Astrocyte of the cerebellum (primary cell): ENCODE measurements at regions of chr7 and their contacts with region 1.

Region 1: DNA sequence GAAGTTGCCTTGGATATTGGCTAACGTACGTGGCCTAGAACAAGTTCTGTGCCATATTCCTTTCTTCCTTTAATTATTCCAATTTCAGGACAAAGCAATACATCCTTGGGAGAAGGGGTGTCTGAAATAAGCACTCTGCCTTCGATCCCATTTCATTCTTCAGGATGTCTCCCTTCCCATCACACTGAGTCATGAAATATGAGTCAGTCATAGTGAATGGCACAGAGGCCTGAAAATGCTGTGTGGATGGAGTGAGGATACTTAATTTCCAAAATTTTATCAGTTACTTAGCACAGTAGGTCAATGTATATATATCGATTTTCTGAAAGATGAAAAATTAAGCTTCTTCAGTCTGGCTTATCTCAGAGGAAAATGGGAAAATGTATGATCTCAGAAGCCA is 19.5 kb downstream of the EVX1 start:
- DNase-seq: no peak
- H3K4me3 ChIP-seq: no peak overlapping the region
- CTCF ChIP-seq: no peak

Region 2: GRCh38 chr7:27179503-27180430 is 82.4 kb before region 1 on chr7:
- in situ Hi-C with region 1: no loop called
- DNase-seq: no peak
- H3K4me3 ChIP-seq: no peak overlapping the region
- CTCF ChIP-seq: peak; percentile 69

Region 3: GRCh38 chr7:27224983-27225934 is 36.9 kb before region 1 on chr7:
- in situ Hi-C with region 1: no loop called
- DNase-seq: no peak
- H3K4me3 ChIP-seq: no peak overlapping the region
- CTCF ChIP-seq: no peak

Region 4: GRCh38 chr7:27300421-27300820 is 38.3 kb after region 1 on chr7:
- in situ Hi-C with region 1: no loop called
- DNase-seq: no peak
- H3K4me3 ChIP-seq: no peak overlapping the region
- CTCF ChIP-seq: no peak

Region 5: DNA sequence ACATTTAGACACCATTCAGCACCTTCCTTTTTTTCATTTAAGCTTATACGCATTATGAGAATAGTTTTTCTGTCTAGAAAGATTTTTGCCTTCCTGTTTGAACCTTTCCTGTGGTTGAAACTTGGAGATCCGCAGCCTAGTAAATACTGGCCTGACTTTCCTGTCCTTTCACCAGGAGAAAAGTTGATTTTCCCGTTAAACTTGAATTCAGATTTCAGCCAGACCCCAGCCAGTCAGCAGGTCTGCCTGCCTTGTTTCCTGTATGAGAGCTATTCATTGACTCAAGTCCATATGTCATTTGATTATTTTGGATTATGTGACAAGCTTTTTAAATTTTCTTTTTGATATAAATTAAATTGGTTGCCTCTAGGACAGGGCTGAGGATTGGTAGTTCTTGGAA is 52.0 kb after region 1 on chr7:
- in situ Hi-C with region 1: loop called (anchors 5 kb)
- DNase-seq: no peak
- H3K4me3 ChIP-seq: no peak overlapping the region
- CTCF ChIP-seq: no peak

Region 6: DNA sequence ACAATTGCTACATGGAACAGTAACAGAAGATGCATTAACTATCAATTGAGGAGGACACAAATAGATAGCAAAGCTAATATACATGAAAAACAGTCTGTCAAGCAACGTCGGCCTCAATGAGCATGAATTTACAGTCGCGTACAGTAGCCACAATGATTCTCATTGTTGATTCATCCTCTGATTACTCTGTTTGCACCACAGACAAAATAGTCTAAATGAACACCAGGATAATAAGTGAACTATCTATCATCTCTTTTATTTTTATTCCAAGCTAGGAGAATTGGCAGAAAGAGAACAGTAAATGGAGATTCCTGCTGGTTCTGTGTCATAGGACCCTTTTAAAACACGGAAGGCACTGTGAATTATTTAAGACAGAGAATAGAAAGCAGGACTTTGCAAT is 89.0 kb after region 1 on chr7:
- in situ Hi-C with region 1: loop called (anchors 5 kb)
- DNase-seq: no peak
- H3K4me3 ChIP-seq: no peak overlapping the region
- CTCF ChIP-seq: no peak